GM12878 (cell line): ENCODE measurements at regions of chrX and their contacts with region 1.

Region 1: DNA sequence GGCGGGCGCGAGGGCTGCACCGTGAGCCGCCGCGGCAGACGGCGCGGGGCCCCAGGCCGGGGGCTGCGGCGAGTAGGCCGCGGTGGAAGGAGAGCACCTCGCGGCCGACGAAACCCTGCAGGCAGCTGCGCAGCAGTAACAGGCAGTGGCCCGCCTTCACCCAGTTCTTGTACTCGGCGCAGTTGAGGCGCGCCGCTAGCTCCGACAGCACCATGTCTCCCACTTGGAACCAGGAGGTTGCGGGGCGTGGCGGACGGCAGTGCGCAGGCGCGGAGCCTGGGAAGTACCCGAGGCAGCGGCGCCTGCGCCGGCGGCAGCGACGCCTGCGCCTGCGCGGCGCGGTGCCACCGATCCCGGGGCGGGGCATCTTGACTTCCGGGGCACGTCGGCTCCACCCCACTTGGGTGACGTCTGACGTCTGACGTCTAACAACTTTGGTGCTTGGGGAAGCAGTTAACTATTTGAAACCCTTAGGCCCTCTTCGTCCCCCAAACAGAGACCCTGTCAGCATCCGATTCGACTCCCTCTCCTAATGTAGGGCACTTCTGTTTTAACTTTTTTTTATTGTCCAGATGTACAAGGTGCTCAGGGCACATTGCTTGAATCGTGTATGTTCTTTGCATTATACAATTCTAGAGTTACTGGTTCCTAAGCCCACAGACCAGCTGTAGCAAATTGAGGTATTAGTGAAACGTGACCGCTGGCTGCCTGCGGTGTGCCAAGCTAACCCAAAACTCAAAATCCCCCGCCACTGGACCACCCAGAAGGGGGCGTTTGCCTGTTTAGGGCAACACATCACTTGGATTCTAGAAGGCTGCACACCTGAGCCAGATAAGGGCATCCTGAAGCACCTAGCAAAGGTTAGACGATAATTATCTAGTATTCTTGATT is at the start of gene CXorf38:
- DNase-seq: peak; percentile 68
- ATAC-seq: peak; percentile 85
- H3K4me3 ChIP-seq: peak within 1 kb of the TSS; percentile 91
- H3K27ac ChIP-seq: peak within 1 kb of the TSS; percentile 70
- H3K4me1 ChIP-seq: no peaks in the 10 kb centered on the region
- H3K27me3 ChIP-seq: no peaks in the 10 kb centered on the region
- CTCF ChIP-seq: no peak
- EP300 ChIP-seq: no peak
- POLR2A ChIP-seq: peak; percentile 92
- RAD21 ChIP-seq: no peak
- polyA plus RNA-seq, gene CXorf38: 2.2 to 6.0 TPM

Region 2: GRCh38 chrX:40291553-40291952 is 356.0 kb before region 1 on chrX:
- CTCF ChIA-PET with region 1: no interaction called
- POLR2A ChIA-PET with region 1: no interaction called
- RAD21 ChIA-PET with region 1: no interaction called
- SMC1A ChIA-PET with region 1: no interaction called
- in situ Hi-C with region 1: no loop called
- intact Hi-C with region 1: no loop called
- DNase-seq: no peak
- ATAC-seq: no peak
- H3K4me3 ChIP-seq: no peak overlapping the region
- H3K27ac ChIP-seq: no peak overlapping the region
- H3K4me1 ChIP-seq: no peaks in the 10 kb centered on the region
- H3K27me3 ChIP-seq: no peaks in the 10 kb centered on the region
- CTCF ChIP-seq: no peak
- EP300 ChIP-seq: no peak
- POLR2A ChIP-seq: no peak
- RAD21 ChIP-seq: no peak

Region 3: GRCh38 chrX:40573763-40574162 is 73.8 kb before region 1 on chrX:
- CTCF ChIA-PET with region 1: interaction called, 8 read pairs
- POLR2A ChIA-PET with region 1: no interaction called
- RAD21 ChIA-PET with region 1: interaction called, 3 read pairs
- SMC1A ChIA-PET with region 1: interaction called, 3 read pairs
- in situ Hi-C with region 1: no loop called
- intact Hi-C with region 1: loop called (anchors 5 kb)
- DNase-seq: no peak
- ATAC-seq: peak; percentile 72
- H3K4me3 ChIP-seq: no peak overlapping the region
- H3K27ac ChIP-seq: no peak overlapping the region
- H3K4me1 ChIP-seq: peaks cover 3% of the 10 kb centered on the region; the same call in 1 of the 2 replicates
- H3K27me3 ChIP-seq: no peaks in the 10 kb centered on the region
- CTCF ChIP-seq: peak; percentile 86 to 90 (median 87)
- EP300 ChIP-seq: no peak
- POLR2A ChIP-seq: no peak
- RAD21 ChIP-seq: peak; percentile 48

Region 4: DNA sequence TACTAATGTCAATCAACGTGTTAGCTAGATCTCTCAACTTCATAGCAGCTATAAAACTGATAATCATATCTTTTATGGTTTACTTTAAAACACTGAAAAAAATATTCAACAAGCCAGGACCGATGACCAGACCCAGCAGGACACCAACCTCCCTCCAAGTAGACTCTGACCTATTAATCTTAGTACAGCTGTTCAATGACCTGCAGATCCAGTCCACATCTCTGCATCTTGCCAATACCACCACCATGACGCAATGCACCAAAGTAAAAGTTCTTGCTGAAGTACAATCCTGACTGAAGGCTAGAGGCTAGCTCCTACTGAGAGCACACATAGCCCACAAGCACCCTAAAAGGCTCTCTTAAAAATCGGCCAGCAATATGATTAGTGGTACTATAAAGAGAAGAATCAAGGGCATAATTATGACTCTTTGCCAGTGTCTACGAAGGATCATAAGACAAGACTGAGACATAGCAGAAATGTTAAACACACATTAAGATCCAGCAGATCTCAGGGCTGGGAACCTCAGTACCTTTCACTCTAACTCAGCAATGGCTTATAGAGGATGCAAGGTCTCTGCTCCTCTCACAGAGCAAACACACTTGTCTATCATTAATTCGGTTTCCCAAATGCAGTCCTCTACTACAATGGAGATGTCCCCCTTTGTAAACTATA is 80.2 kb after region 1 on chrX:
- CTCF ChIA-PET with region 1: interaction called, 11 read pairs
- POLR2A ChIA-PET with region 1: no interaction called
- RAD21 ChIA-PET with region 1: interaction called, 3 read pairs
- SMC1A ChIA-PET with region 1: interaction called, 5 read pairs
- in situ Hi-C with region 1: no loop called
- intact Hi-C with region 1: no loop called
- DNase-seq: no peak
- ATAC-seq: peak; percentile 21
- H3K4me3 ChIP-seq: no peak overlapping the region; the same call in 1 of the 2 replicates
- H3K27ac ChIP-seq: no peak overlapping the region
- H3K4me1 ChIP-seq: no peaks in the 10 kb centered on the region; the same call in 1 of the 2 replicates
- H3K27me3 ChIP-seq: no peaks in the 10 kb centered on the region
- CTCF ChIP-seq: no peak
- EP300 ChIP-seq: no peak
- POLR2A ChIP-seq: no peak
- RAD21 ChIP-seq: no peak

Region 5: GRCh38 chrX:40792433-40792832 is 144.9 kb after region 1 on chrX:
- CTCF ChIA-PET with region 1: interaction called, 130 read pairs
- POLR2A ChIA-PET with region 1: interaction called, 9 read pairs
- RAD21 ChIA-PET with region 1: interaction called, 58 read pairs
- SMC1A ChIA-PET with region 1: interaction called, 108 read pairs
- in situ Hi-C with region 1: no loop called
- intact Hi-C with region 1: loop called (anchors 1 kb)
- DNase-seq: no peak
- ATAC-seq: peak; percentile 22; the same call in 2 of the 3 replicates
- H3K4me3 ChIP-seq: no peak overlapping the region
- H3K27ac ChIP-seq: no peak overlapping the region
- H3K4me1 ChIP-seq: no peaks in the 10 kb centered on the region
- H3K27me3 ChIP-seq: no peaks in the 10 kb centered on the region
- CTCF ChIP-seq: no peak
- EP300 ChIP-seq: no peak
- POLR2A ChIP-seq: no peak
- RAD21 ChIP-seq: no peak

Region 6: GRCh38 chrX:41110801-41111625 is 463.5 kb after region 1 on chrX:
- CTCF ChIA-PET with region 1: interaction called, 94 read pairs
- POLR2A ChIA-PET with region 1: interaction called, 3 read pairs
- RAD21 ChIA-PET with region 1: interaction called, 49 read pairs
- SMC1A ChIA-PET with region 1: interaction called, 49 read pairs
- in situ Hi-C with region 1: loop called (anchors 10 kb)
- intact Hi-C with region 1: loop called (anchors 1 kb)
- DNase-seq: no peak
- ATAC-seq: no peak
- H3K4me3 ChIP-seq: no peak overlapping the region
- H3K27ac ChIP-seq: no peak overlapping the region
- H3K4me1 ChIP-seq: peaks cover 4% of the 10 kb centered on the region; the same call in 1 of the 2 replicates
- H3K27me3 ChIP-seq: no peaks in the 10 kb centered on the region
- CTCF ChIP-seq: no peak
- EP300 ChIP-seq: no peak
- POLR2A ChIP-seq: no peak
- RAD21 ChIP-seq: no peak

Region 7: GRCh38 chrX:41259516-41259915 is 612.0 kb after region 1 on chrX:
- CTCF ChIA-PET with region 1: interaction called, 14 read pairs
- POLR2A ChIA-PET with region 1: no interaction called
- RAD21 ChIA-PET with region 1: no interaction called
- SMC1A ChIA-PET with region 1: no interaction called
- in situ Hi-C with region 1: no loop called
- intact Hi-C with region 1: loop called (anchors 10 kb)
- DNase-seq: no peak
- ATAC-seq: no peak
- H3K4me3 ChIP-seq: no peak overlapping the region
- H3K27ac ChIP-seq: no peak overlapping the region
- H3K4me1 ChIP-seq: peaks cover 6% of the 10 kb centered on the region; the same call in 1 of the 2 replicates
- H3K27me3 ChIP-seq: no peaks in the 10 kb centered on the region
- CTCF ChIP-seq: no peak
- EP300 ChIP-seq: no peak
- POLR2A ChIP-seq: no peak
- RAD21 ChIP-seq: no peak